ENCODE measurements at regions of chr20 and their contacts with region 1.

Region 1: GRCh38 chr20:5222919-5223634 is 93.7 kb downstream of the PROKR2 start:
- DNase-seq: peak; percentile 83
- H3K4me3 Mint-ChIP-seq: no peak overlapping the region
- H3K27ac Mint-ChIP-seq: no peak overlapping the region
- H3K4me1 Mint-ChIP-seq: no peaks in the 10 kb centered on the region
- H3K27me3 Mint-ChIP-seq: peaks cover 2% of the 10 kb centered on the region

Region 2: GRCh38 chr20:5056801-5057599 is 166.1 kb before region 1 on chr20:
- CTCF ChIA-PET with region 1: interaction called, 3 read pairs
- intact Hi-C with region 1: loop called (anchors 2 kb)
- DNase-seq: peak; percentile 84
- H3K4me3 Mint-ChIP-seq: peak overlapping the region; percentile 10
- H3K27ac Mint-ChIP-seq: peak overlapping the region; percentile 46
- H3K4me1 Mint-ChIP-seq: peaks cover 16% of the 10 kb centered on the region
- H3K27me3 Mint-ChIP-seq: no peaks in the 10 kb centered on the region

Region 3: GRCh38 chr20:5113615-5113986 is 109.5 kb before region 1 on chr20:
- CTCF ChIA-PET with region 1: interaction called, 15 read pairs
- intact Hi-C with region 1: no loop called
- DNase-seq: no peak
- H3K4me3 Mint-ChIP-seq: peak overlapping the region; percentile 89
- H3K27ac Mint-ChIP-seq: peak overlapping the region; percentile 89
- H3K4me1 Mint-ChIP-seq: peaks cover 43% of the 10 kb centered on the region
- H3K27me3 Mint-ChIP-seq: no peaks in the 10 kb centered on the region

Region 4: GRCh38 chr20:5153612-5154542 is 69.2 kb before region 1 on chr20:
- CTCF ChIA-PET with region 1: no interaction called
- intact Hi-C with region 1: no loop called
- DNase-seq: peak; percentile 32
- H3K4me3 Mint-ChIP-seq: no peak overlapping the region
- H3K27ac Mint-ChIP-seq: no peak overlapping the region
- H3K4me1 Mint-ChIP-seq: peaks cover 50% of the 10 kb centered on the region
- H3K27me3 Mint-ChIP-seq: no peaks in the 10 kb centered on the region

Region 5: DNA sequence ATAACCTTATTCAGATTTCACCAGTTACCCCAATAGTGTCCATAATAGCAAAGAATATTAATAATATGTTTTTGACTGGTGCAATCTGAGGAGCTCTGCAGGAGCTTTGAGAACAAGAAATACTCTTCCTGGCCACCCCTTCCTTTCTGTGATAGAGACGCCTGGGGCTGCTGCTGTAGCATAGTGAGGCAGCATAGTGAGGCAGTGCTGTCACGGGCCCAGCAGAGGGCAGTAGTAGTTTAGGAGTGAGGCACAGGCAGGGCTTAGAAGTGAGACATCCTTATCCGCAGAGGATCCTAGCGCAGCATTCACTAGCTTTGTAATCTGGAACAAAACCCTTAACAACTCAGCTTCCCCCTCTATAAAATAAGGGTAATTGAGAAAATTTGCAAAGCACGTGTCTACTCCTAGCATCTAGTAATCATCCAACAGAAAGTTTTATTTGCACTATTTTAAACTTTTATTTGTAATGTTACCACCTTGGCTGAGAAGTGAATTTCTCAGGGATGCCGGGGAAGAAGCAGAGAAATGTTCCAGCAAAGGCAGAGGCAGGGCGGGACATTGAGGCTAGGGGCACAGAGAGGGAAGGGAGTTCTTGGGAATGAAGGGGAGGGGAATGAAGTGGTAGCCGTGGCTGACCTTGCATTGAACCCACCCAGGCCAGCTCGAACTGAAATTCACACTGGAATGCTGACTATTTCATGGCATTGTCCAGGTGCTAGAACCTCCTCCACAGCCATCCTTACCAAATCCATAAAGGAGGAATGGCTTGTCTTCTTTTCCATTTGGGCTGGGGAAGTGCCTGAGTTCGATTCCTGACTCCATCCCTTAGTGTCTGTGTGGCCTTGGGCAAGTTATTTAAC is 17.5 kb before region 1 on chr20:
- CTCF ChIA-PET with region 1: interaction called, 58 read pairs
- intact Hi-C with region 1: loop called (anchors 1 kb)
- DNase-seq: peak; percentile 86
- H3K4me3 Mint-ChIP-seq: no peak overlapping the region
- H3K27ac Mint-ChIP-seq: no peak overlapping the region
- H3K4me1 Mint-ChIP-seq: peaks cover 2% of the 10 kb centered on the region
- H3K27me3 Mint-ChIP-seq: no peaks in the 10 kb centered on the region

Region 6: GRCh38 chr20:5749952-5750779 is 527.1 kb after region 1 on chr20 and contains the start of gene SHLD1:
- CTCF ChIA-PET with region 1: no interaction called
- intact Hi-C with region 1: no loop called
- DNase-seq: peak; percentile 89
- H3K4me3 Mint-ChIP-seq: peak within 1 kb of the TSS; percentile 93
- H3K27ac Mint-ChIP-seq: peak within 1 kb of the TSS; percentile 97
- H3K4me1 Mint-ChIP-seq: peaks cover 17% of the 10 kb centered on the region
- H3K27me3 Mint-ChIP-seq: no peaks in the 10 kb centered on the region
- total RNA-seq, gene SHLD1: 10.1 TPM